Activated naive CD4-positive, alpha-beta T cell treated with anti-CD3 and anti-CD28 coated beads for 36 hours (primary cell): ENCODE measurements at regions of chr1 and their contacts with region 1.

Region 1: DNA sequence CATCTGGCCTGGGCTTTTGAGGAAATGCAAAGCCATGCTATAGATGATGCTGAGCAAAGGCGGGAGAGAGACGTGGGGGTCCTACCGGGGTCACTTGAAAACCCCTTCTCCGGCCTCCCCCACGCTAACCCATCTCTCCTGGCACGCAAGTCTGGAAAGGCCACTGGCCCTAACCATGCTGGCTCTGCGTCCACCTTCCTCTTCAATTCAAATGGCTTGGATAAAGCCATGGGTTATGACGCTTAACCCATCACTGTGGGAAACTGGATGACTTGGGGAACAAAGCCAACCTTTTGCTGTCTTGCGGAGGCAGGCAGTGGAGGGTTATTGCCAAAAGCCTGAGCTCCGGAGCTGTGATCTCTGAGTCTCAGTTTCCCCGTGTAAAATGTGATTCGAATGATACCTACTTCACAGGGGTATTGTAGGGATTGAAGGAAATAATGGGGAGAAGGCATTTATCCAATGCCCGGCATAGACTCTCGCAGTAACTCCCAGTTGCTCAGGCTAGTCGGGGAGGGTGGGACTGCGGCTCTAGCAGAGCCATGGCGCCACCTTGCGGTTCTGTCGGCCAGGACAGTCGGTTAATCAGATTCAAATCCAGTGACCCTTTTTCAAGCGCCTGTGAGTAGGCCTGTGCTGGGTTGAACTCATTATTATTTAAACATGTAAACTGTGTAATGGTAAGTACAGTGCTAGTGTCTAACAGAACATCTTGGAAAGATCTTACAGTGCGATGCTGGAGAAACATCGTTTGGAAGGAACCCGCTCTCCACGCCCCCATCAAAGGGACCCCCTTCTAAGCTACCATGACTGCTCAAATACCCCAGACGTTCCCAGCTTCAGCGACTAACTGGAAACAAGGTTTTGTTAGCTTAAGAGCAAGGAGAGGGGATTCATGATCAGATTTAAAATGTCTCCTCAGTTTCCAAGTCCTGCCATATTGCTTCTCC is 20.3 kb downstream of the NEK2 start:
- DNase-seq: peak; percentile 89
- H3K4me3 Mint-ChIP-seq: no peak overlapping the region
- H3K27ac Mint-ChIP-seq: no peak overlapping the region
- H3K4me1 Mint-ChIP-seq: no peaks in the 10 kb centered on the region
- H3K27me3 Mint-ChIP-seq: no peaks in the 10 kb centered on the region

Region 2: DNA sequence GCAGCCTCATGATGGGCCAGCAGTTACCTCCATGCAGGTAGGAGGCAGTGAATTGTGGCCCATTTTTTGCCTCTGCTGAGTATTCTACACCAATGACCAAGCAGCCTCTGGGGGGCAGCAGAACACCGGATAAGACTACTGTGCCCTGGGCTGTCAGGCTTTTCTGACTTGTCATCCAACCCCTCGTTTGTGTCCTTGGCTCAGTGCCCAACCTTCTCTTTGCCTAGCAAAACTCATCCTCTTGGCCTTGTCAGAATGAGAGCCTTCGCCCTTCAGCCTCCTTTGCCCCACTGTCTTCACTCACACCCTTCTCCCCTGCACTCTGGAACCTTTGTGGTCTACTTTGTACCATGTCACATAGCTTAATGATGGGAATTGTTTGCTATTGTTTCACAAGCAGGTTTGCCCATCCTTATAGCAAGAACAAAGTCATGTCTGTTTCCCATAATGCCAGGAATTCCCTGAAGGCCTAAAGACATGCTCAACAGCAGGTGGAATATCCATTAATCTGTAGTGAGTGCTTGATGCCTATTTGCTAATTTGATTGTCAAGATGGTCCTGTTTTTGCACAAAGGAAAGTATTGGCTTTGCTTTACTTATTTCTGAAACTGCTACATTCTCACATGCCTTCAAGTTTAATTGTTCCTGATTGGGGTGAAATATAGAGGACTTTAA is 1070.5 kb before region 1 on chr1:
- CTCF ChIA-PET with region 1: no interaction called
- intact Hi-C with region 1: loop called (anchors 10 kb)
- DNase-seq: peak; percentile 90
- H3K4me3 Mint-ChIP-seq: no peak overlapping the region
- H3K27ac Mint-ChIP-seq: no peak overlapping the region
- H3K4me1 Mint-ChIP-seq: peaks cover 3% of the 10 kb centered on the region
- H3K27me3 Mint-ChIP-seq: peaks cover 6% of the 10 kb centered on the region

Region 3: DNA sequence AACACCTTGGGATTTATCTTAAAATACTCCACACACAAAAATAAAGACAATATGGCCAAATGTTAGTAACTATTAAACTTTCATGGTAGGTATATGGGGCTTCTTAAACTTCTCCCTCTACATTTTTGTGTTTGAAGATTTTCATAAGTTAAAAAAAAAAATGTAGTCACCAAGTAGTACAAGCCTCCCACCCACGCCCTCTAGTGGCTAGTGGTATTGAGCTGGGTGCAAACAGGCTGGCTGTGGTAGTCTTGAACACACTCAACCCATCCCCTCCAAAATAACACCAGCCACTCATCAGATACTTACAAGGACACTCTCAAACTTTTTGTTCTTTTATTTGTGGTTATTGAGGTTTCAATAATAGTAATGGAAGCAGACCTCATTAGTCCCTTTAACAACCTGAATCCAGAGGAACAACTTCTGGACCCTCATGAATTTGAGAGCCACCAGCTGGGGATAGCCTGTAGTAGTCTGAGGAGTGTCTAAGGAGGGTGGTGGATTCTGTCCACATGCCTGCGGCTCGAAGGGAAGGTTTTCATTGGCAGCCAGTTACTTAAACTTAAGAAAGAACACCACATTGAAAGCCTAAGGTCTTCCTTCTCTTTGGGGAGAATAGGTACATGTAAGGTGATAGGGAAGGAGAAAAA is 178.8 kb before region 1 on chr1:
- CTCF ChIA-PET with region 1: interaction called, 3 read pairs
- intact Hi-C with region 1: loop called (anchors 2 kb)
- DNase-seq: peak; percentile 90
- H3K4me3 Mint-ChIP-seq: no peak overlapping the region
- H3K27ac Mint-ChIP-seq: no peak overlapping the region
- H3K4me1 Mint-ChIP-seq: no peaks in the 10 kb centered on the region
- H3K27me3 Mint-ChIP-seq: peaks cover 16% of the 10 kb centered on the region

Region 4: GRCh38 chr1:211639500-211640300 is 15.4 kb before region 1 on chr1:
- CTCF ChIA-PET with region 1: interaction called, 11 read pairs
- intact Hi-C with region 1: no loop called
- DNase-seq: no peak
- H3K4me3 Mint-ChIP-seq: no peak overlapping the region
- H3K27ac Mint-ChIP-seq: no peak overlapping the region
- H3K4me1 Mint-ChIP-seq: peaks cover 12% of the 10 kb centered on the region
- H3K27me3 Mint-ChIP-seq: no peaks in the 10 kb centered on the region